ENCODE measurements at regions of chr12 and their contacts with region 1.

Region 1: DNA sequence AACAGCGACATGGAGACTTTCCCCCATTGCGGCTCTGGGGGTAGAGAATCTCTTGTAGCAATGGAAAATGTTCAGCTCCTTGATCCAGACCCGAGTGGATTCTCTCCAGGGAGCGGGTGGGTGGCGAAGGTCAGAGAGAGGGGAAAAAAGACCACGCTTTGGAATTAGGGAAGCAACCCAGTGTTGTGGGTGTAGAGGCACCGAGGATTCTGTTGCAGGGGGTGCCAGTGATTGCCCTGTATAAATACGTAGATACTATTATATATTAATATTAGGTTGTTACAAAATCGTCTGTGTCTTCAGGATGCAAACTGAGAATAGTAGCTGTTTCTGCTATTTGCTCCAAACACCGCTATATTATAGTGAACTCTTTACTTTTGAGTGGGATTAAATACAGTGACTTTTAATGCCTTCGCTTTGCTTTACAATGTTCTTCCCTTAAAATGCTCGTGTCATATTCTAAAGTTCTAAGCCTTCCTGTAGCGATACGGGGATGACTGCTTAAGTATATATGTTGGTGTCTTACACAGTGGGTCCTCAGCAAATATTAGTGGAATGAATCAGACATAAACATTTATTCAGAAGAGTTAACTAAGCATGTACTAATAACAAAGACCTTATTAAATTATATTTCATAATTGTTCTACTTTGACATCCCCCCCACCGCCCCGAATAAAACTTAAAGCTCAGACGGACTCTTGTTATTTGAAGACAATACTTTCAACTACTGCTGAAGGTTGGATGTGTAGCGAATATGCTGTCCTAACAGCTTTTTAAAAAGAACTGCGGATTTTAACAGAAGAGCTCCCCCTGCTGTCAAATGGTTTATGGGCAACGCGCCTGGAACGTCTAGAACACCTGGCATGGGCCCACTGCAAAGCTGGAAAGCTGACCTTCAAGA is 136.4 kb upstream of the KRAS start:
- DNase-seq: peak; percentile 60 to 91 (median 69)
- ATAC-seq: peak; percentile 6
- H3K4me3 ChIP-seq: peak overlapping the region; percentile 75
- H3K4me3 Mint-ChIP-seq: peak overlapping the region; percentile 97
- H3K27ac ChIP-seq: peak overlapping the region; percentile 100
- H3K27ac Mint-ChIP-seq: peak overlapping the region; percentile 99
- H3K4me1 ChIP-seq: peaks cover 32% of the 10 kb centered on the region
- H3K4me1 Mint-ChIP-seq: peaks cover 47% of the 10 kb centered on the region
- H3K27me3 ChIP-seq: no peaks in the 10 kb centered on the region
- H3K27me3 Mint-ChIP-seq: peaks cover 6% of the 10 kb centered on the region
- CTCF ChIP-seq: peak; percentile 85

Region 2: GRCh38 chr12:25151476-25151875 is 235.6 kb before region 1 on chr12:
- CTCF ChIA-PET with region 1: no interaction called
- POLR2A ChIA-PET with region 1: interaction called, 10 read pairs
- intact Hi-C with region 1: loop called (anchors 1 to 10 kb)
- DNase-seq: no peak
- ATAC-seq: no peak
- H3K4me3 ChIP-seq: no peak overlapping the region
- H3K4me3 Mint-ChIP-seq: no peak overlapping the region
- H3K27ac ChIP-seq: no peak overlapping the region
- H3K27ac Mint-ChIP-seq: no peak overlapping the region
- H3K4me1 ChIP-seq: no peaks in the 10 kb centered on the region
- H3K4me1 Mint-ChIP-seq: peaks cover 7% of the 10 kb centered on the region
- H3K27me3 ChIP-seq: no peaks in the 10 kb centered on the region
- H3K27me3 Mint-ChIP-seq: no peaks in the 10 kb centered on the region
- CTCF ChIP-seq: no peak

Region 3: GRCh38 chr12:25208554-25208953 is 178.5 kb before region 1 on chr12:
- CTCF ChIA-PET with region 1: interaction called, 7 read pairs
- POLR2A ChIA-PET with region 1: interaction called, 11 read pairs
- intact Hi-C with region 1: loop called in 1 of 2 experiments (anchors 1 kb)
- DNase-seq: no peak
- ATAC-seq: no peak
- H3K4me3 ChIP-seq: no peak overlapping the region
- H3K4me3 Mint-ChIP-seq: no peak overlapping the region
- H3K27ac ChIP-seq: no peak overlapping the region
- H3K27ac Mint-ChIP-seq: no peak overlapping the region
- H3K4me1 ChIP-seq: no peaks in the 10 kb centered on the region
- H3K4me1 Mint-ChIP-seq: peaks cover 11% of the 10 kb centered on the region
- H3K27me3 ChIP-seq: no peaks in the 10 kb centered on the region
- H3K27me3 Mint-ChIP-seq: no peaks in the 10 kb centered on the region
- CTCF ChIP-seq: no peak

Region 4: GRCh38 chr12:25250744-25251730 is 136.0 kb before region 1 on chr12 and contains the start of gene KRAS:
- CTCF ChIA-PET with region 1: interaction called, 10 read pairs
- POLR2A ChIA-PET with region 1: interaction called, 8 read pairs
- intact Hi-C with region 1: no loop called
- DNase-seq: peak; percentile 83 to 97 (median 89)
- ATAC-seq: peak; percentile 91
- H3K4me3 ChIP-seq: peak within 1 kb of the TSS; percentile 85
- H3K4me3 Mint-ChIP-seq: peak within 1 kb of the TSS; percentile 99
- H3K27ac ChIP-seq: peak within 1 kb of the TSS; percentile 52 to 73
- H3K27ac Mint-ChIP-seq: peak within 1 kb of the TSS; percentile 85
- H3K4me1 ChIP-seq: peaks cover 29% of the 10 kb centered on the region
- H3K4me1 Mint-ChIP-seq: peaks cover 53% of the 10 kb centered on the region
- H3K27me3 ChIP-seq: no peaks in the 10 kb centered on the region
- H3K27me3 Mint-ChIP-seq: no peaks in the 10 kb centered on the region
- CTCF ChIP-seq: no peak
- total RNA-seq, gene KRAS: 45.0 to 48.7 TPM

Region 5: GRCh38 chr12:25328072-25328712 is 58.9 kb before region 1 on chr12:
- CTCF ChIA-PET with region 1: interaction called, 6 read pairs
- POLR2A ChIA-PET with region 1: interaction called, 10 read pairs
- intact Hi-C with region 1: loop called in 1 of 2 experiments (anchors 5 kb)
- DNase-seq: no peak
- ATAC-seq: no peak
- H3K4me3 ChIP-seq: no peak overlapping the region
- H3K4me3 Mint-ChIP-seq: no peak overlapping the region
- H3K27ac ChIP-seq: no peak overlapping the region
- H3K27ac Mint-ChIP-seq: no peak overlapping the region
- H3K4me1 ChIP-seq: peaks cover 10% of the 10 kb centered on the region
- H3K4me1 Mint-ChIP-seq: peaks cover 12% of the 10 kb centered on the region
- H3K27me3 ChIP-seq: no peaks in the 10 kb centered on the region
- H3K27me3 Mint-ChIP-seq: no peaks in the 10 kb centered on the region
- CTCF ChIP-seq: no peak

Region 6: GRCh38 chr12:25491396-25492325 is 104.6 kb after region 1 on chr12:
- CTCF ChIA-PET with region 1: no interaction called
- POLR2A ChIA-PET with region 1: no interaction called
- intact Hi-C with region 1: no loop called
- DNase-seq: no peak
- ATAC-seq: no peak
- H3K4me3 ChIP-seq: no peak overlapping the region
- H3K4me3 Mint-ChIP-seq: no peak overlapping the region
- H3K27ac ChIP-seq: no peak overlapping the region
- H3K27ac Mint-ChIP-seq: no peak overlapping the region
- H3K4me1 ChIP-seq: no peaks in the 10 kb centered on the region
- H3K4me1 Mint-ChIP-seq: peaks cover 12% of the 10 kb centered on the region
- H3K27me3 ChIP-seq: no peaks in the 10 kb centered on the region
- H3K27me3 Mint-ChIP-seq: peaks cover 4% of the 10 kb centered on the region
- CTCF ChIP-seq: no peak

Measured in CD4-positive, alpha-beta T cell (primary cell).